ENCODE measurements at regions of chr11 and their contacts with region 1.

Region 1: GRCh38 chr11:32960553-32961164 is 55.0 kb upstream of the DEPDC7 start:
- DNase-seq: no peak
- ATAC-seq: peak; percentile 36
- H3K4me3 Mint-ChIP-seq: no peak overlapping the region
- H3K27ac Mint-ChIP-seq: no peak overlapping the region
- H3K4me1 Mint-ChIP-seq: peaks cover 11% of the 10 kb centered on the region
- H3K27me3 Mint-ChIP-seq: no peaks in the 10 kb centered on the region

Region 2: DNA sequence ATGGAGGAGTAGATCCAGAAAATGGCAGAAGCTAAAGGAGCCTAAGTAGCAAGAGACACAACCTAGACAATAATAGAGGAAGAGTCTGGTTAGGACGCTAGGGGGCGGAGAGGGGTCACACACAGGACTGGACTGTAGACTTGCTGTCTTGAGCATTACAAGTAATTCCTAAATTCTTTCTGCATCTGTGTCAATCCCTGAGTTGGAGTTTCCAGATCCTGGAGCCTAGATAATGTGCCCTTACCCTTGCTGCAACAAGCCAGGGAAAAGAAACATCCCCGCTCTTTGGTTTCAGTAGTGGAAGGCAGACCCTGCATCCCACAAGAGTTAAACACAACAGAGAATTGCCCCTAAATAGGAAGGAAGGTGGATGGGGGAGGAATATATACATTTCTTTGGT is 151.3 kb before region 1 on chr11:
- CTCF ChIA-PET with region 1: no interaction called
- POLR2A ChIA-PET with region 1: no interaction called
- intact Hi-C with region 1: loop called (anchors 5 kb)
- DNase-seq: peak; percentile 83
- ATAC-seq: peak; percentile 94
- H3K4me3 Mint-ChIP-seq: no peak overlapping the region
- H3K27ac Mint-ChIP-seq: no peak overlapping the region
- H3K4me1 Mint-ChIP-seq: no peaks in the 10 kb centered on the region
- H3K27me3 Mint-ChIP-seq: no peaks in the 10 kb centered on the region

Region 3: DNA sequence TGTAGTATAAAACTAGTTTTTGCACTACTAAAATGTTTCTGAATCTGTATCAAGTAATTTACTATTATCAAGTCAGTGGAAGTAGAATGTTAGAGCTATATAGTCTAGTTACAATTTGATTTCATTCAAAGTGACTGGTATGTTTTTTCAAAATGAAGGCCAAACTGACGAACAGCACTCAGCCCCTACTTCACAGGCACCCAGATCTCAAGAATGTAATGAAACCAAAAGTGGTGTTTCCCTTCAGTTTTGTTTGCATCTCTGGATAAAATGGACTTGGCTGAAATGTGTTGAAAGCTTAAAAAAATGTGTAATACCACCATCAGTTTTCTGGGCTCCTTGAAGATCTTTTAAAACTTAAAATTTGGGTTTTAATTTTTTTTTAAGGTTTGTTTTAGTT is 21.6 kb before region 1 on chr11:
- CTCF ChIA-PET with region 1: no interaction called
- POLR2A ChIA-PET with region 1: no interaction called
- intact Hi-C with region 1: no loop called
- DNase-seq: no peak
- ATAC-seq: no peak
- H3K4me3 Mint-ChIP-seq: no peak overlapping the region
- H3K27ac Mint-ChIP-seq: no peak overlapping the region
- H3K4me1 Mint-ChIP-seq: peaks cover 17% of the 10 kb centered on the region
- H3K27me3 Mint-ChIP-seq: no peaks in the 10 kb centered on the region

Region 4: DNA sequence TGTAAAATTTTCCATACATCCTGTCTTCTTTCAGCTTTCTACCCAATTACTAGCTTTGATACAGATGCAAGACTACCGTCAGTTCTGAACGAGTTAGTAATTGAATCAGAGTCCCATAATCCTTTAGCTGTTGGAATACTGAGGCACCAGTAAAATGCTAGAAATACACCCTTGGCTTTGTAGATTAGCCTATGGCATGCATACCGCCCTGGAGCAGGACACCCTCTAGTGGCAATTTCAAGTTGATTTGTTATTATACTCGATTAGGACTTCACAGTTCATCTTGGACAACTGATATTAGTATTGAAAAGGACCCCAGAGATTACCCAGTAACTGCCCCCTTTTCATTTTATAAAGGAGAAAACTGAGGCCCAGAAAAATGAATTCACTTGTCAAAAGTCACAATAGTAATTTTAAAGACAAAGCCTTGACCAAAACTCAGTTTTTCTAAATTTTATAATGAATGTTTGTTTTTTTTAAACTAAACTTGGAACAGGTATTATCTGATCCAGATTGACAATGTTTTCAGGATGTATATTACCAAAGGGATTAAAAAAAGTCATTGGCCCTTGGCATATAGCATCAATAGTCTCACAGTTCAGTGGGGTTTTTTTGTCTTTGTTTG is 369.2 kb after region 1 on chr11:
- CTCF ChIA-PET with region 1: no interaction called
- POLR2A ChIA-PET with region 1: no interaction called
- intact Hi-C with region 1: loop called (anchors 5 kb)
- DNase-seq: peak; percentile 57
- ATAC-seq: peak; percentile 78
- H3K4me3 Mint-ChIP-seq: no peak overlapping the region
- H3K27ac Mint-ChIP-seq: no peak overlapping the region
- H3K4me1 Mint-ChIP-seq: peaks cover 12% of the 10 kb centered on the region
- H3K27me3 Mint-ChIP-seq: no peaks in the 10 kb centered on the region

Measured in activated CD4-positive, alpha-beta T cell treated with anti-CD3 and anti-CD28 coated beads for 36 hours (primary cell).